HCT116 (cell line): ENCODE measurements at regions of chr3 and their contacts with region 1.

Region 1: GRCh38 chr3:118628704-118629341 is 405.8 kb downstream of the IGSF11 start:
- DNase-seq: peak; percentile 59
- ATAC-seq: peak; percentile 98
- H3K4me3 ChIP-seq: no peak overlapping the region
- H3K27ac ChIP-seq: no peak overlapping the region
- H3K4me1 ChIP-seq: no peaks in the 10 kb centered on the region
- H3K27me3 ChIP-seq: no peaks in the 10 kb centered on the region
- CTCF ChIP-seq: peak; percentile 34 to 77 (median 71); a peak in 5 of 6 replicates
- POLR2A ChIP-seq: no peak
- RAD21 ChIP-seq: peak; percentile 80

Region 2: GRCh38 chr3:117997201-117998049 is 631.4 kb before region 1 on chr3:
- CTCF ChIA-PET with region 1: no interaction called
- POLR2A ChIA-PET with region 1: no interaction called
- RAD21 ChIA-PET with region 1: no interaction called
- intact Hi-C with region 1: loop called (anchors 5 kb)
- DNase-seq: peak; percentile 15
- ATAC-seq: peak; percentile 97
- H3K4me3 ChIP-seq: no peak overlapping the region
- H3K27ac ChIP-seq: no peak overlapping the region
- H3K4me1 ChIP-seq: no peaks in the 10 kb centered on the region
- H3K27me3 ChIP-seq: peaks cover 3% of the 10 kb centered on the region; the same call in 1 of the 2 replicates
- CTCF ChIP-seq: peak; percentile 12 to 81 (median 80); a peak in 5 of 6 replicates
- POLR2A ChIP-seq: no peak
- RAD21 ChIP-seq: peak; percentile 41

Region 3: DNA sequence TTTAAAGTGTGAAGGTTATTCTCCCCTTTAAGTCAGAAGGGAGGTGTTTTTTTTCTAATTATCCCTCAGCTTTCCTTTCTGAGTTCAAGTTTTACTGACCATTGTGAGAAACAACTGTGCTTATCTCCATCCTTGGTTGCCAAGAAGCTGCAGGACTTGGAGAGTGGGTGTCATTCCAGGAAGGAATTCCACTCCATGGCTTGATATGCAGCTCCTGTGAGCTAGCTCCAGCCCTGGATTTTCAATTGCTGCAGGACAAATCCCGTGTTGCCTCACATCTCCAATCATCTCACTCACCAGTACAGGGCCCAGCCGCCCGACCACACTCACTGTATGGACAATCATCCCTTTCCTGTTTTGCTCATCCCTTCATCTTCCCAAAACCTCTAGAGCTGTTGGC is 283.4 kb after region 1 on chr3:
- CTCF ChIA-PET with region 1: no interaction called
- POLR2A ChIA-PET with region 1: no interaction called
- RAD21 ChIA-PET with region 1: no interaction called
- intact Hi-C with region 1: no loop called
- DNase-seq: no peak
- ATAC-seq: no peak
- H3K4me3 ChIP-seq: no peak overlapping the region
- H3K27ac ChIP-seq: no peak overlapping the region
- H3K4me1 ChIP-seq: no peaks in the 10 kb centered on the region
- H3K27me3 ChIP-seq: peaks cover 52% of the 10 kb centered on the region
- CTCF ChIP-seq: no peak
- POLR2A ChIP-seq: no peak
- RAD21 ChIP-seq: no peak